Cardiac septum (tissue), 1 donor: ENCODE measurements at regions of chr16 and their contacts with region 1.

Region 1: DNA sequence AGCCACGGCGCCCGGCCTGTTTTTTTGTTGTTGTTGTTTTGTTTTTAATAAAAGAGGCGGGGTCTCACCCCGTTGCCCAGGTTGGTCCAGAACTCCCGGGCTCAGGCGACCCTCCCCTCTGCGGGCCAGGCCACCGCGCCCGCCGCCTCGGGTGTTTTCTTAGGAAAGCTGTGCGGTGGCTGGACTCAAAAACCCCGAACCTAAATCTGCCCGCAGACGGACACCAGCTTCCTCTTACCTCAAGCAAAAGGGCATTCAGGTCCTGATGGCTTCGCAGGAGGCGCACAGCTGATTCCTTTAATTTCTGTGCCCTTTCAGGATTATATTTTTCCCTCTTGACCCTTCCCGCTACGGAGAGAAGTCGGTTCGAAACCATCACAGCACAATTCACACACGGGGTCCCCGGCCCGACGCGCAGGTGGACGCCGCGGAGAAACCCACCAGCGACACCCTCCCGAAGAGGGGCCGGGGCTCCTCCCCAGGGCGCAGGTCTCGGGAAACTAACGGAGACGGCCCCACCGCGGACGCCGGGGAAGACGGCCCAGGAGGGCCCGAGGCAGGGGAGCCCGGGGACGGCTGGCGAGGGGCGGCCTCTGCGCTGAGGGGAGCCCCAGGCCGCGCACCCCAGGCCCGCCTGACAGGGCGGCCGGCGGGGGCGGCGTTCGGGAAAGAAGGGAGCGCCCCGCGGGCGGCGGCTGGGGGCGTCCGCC is 653 bp downstream of the FANCA start:
- DNase-seq: no peak

Region 2: DNA sequence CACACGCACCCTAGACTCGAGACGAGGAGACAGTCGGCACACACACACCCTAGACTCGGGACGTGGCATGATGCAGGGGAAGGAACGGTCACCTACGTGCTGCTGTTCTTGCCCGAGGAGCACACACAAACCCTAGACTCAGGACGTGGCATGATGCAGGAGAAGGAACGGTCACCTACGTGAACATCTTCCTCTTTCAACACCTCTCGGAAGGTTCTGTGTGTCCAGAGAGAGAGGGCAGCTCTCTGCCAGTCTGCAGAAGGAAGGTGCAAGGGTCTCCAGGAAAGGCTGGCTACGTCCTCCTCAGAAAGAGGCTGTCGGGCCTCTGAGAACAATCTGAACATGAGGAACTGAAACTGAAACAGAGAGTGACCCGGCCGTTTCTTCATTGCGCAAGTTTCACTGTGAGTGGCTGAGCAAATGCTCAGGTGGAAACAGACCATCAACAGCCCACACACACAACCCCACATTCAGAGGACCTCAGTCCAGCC is 51.0 kb before region 1 on chr16:
- intact Hi-C with region 1: no loop called
- DNase-seq: peak; percentile 88

Region 3: GRCh38 chr16:89785523-89786155 is 30.2 kb before region 1 on chr16:
- intact Hi-C with region 1: no loop called
- DNase-seq: no peak

Region 4: GRCh38 chr16:89873972-89874689 is 58.3 kb after region 1 on chr16:
- intact Hi-C with region 1: loop called (anchors 5 kb)
- DNase-seq: peak; percentile 99